H1 (cell line): ENCODE measurements at regions of chr9 and their contacts with region 1.

Region 1: GRCh38 chr9:128714586-128715435 is 9.1 kb downstream of the ZDHHC12 start:
- DNase-seq: no peak
- H3K4me3 ChIP-seq: no peak overlapping the region
- H3K27ac ChIP-seq: no peak overlapping the region
- H3K4me1 ChIP-seq: no peaks in the 10 kb centered on the region
- H3K27me3 ChIP-seq: no peaks in the 10 kb centered on the region
- CTCF ChIP-seq: no peak
- EP300 ChIP-seq: no peak
- POLR2A ChIP-seq: no peak
- RAD21 ChIP-seq: no peak

Region 2: GRCh38 chr9:128614722-128615121 is 100.1 kb before region 1 on chr9:
- CTCF ChIA-PET with region 1: no interaction called
- POLR2A ChIA-PET with region 1: no interaction called
- DNase-seq: no peak
- H3K4me3 ChIP-seq: no peak overlapping the region
- H3K27ac ChIP-seq: no peak overlapping the region
- H3K4me1 ChIP-seq: no peaks in the 10 kb centered on the region
- H3K27me3 ChIP-seq: no peaks in the 10 kb centered on the region
- CTCF ChIP-seq: no peak
- EP300 ChIP-seq: no peak
- POLR2A ChIP-seq: no peak
- RAD21 ChIP-seq: no peak

Region 3: DNA sequence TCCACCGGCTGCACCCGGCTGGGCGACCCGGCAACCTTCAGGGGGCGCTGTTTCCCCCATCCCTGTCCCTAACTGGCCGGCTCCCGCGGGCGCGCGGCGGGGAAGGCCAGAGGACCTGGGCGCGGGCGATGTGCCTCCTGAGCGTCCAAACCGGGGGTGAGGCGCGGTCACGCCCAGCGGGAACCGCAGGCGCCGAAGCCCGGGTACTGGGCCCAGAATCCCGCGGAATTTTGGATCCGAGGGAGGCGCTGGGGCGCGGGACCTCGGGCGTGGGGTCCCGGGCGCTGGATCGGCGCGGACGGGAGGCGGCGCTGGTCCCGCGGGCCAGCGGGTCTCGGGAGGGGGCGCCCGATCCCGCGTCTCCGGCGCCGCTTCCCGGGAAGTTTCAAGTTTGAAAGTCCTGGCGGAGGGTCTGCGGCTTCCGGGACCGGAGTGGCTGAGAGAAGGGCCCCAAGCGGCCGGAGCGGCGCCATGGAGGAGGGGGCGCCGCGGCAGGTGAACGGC is 12.3 kb before region 1 on chr9 and contains the start of gene PKN3:
- CTCF ChIA-PET with region 1: interaction called, 13 read pairs
- POLR2A ChIA-PET with region 1: interaction called, 1,197 read pairs
- DNase-seq: peak; percentile 61 to 99
- H3K4me3 ChIP-seq: peak within 1 kb of the TSS; percentile 51 to 75 (median 65)
- H3K27ac ChIP-seq: no peak within 1 kb of the TSS; the same call in 1 of the 2 replicates
- H3K4me1 ChIP-seq: peaks cover 0 to 4% (median 2%) of the 10 kb centered on the region in 4 experiments; a peak in 3 of 7 replicates
- H3K27me3 ChIP-seq: no peaks in the 10 kb centered on the region
- CTCF ChIP-seq: peak; percentile 72 to 87 (median 86)
- EP300 ChIP-seq: 0 out of 3 replicates have a peak, but pooled peaks of 1 of the 2 experiments have one; percentile 20
- POLR2A ChIP-seq: no peak; a peak in 1 of 3 replicates
- RAD21 ChIP-seq: peak; percentile 34 to 46; a peak in 3 of 4 replicates
- total RNA-seq, gene PKN3: 15.2 and 16.3 TPM in 2 replicates